ENCODE measurements at regions of chr2 and their contacts with region 1.

Region 1: GRCh38 chr2:70111752-70112591 is 24.7 kb downstream of the PCBP1 start:
- DNase-seq: no peak
- ATAC-seq: no peak
- H3K4me3 ChIP-seq: no peak overlapping the region
- H3K4me3 Mint-ChIP-seq: peak overlapping the region in 1 of 3 donors; percentile 13
- H3K27ac ChIP-seq: peak overlapping the region; percentile 91
- H3K27ac Mint-ChIP-seq: peak overlapping the region; percentile 43 to 79
- H3K4me1 ChIP-seq: peaks cover 11 to 68% of the 10 kb centered on the region in 2 experiments
- H3K4me1 Mint-ChIP-seq: peaks cover 56 to 71% (median 70%) of the 10 kb centered on the region in 3 donors
- H3K27me3 ChIP-seq: no peaks in the 10 kb centered on the region
- H3K27me3 Mint-ChIP-seq: no peaks in the 10 kb centered on the region

Region 2: DNA sequence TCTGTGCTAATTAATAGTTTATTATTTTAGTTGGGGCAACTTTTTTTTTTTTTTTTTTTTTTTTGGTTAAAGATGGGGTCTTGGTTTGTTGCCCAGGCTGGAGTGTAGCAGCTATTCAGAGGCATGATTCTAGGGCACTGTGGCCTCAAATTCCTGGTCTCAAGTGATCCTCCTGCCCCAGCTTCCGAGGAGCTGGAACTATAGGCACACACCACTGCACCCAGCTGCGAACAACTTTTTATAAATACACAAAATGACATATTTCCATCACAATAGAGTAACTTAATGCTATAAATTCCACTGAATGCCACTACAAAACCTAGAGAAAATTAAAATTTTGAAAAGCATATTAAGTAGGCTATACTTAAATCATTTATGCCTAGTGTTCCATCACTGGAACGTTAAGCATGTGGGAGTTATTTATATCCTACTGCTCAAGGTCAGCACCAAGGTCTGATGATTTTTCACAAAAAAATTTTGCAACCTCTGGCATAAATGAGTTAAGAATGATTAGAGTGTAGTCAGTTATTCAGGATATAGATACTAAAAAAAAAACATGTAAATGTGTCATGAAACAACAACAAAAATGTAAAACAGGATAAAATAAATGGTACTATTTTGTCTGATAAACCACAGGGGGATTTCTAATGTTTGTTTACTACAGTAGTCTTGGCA is 771.7 kb before region 1 on chr2:
- CTCF ChIA-PET with region 1: no interaction called
- POLR2A ChIA-PET with region 1: interaction called in 1 of 2 experiments, 10 read pairs
- DNase-seq: no peak
- ATAC-seq: no peak
- H3K4me3 ChIP-seq: no peak overlapping the region
- H3K4me3 Mint-ChIP-seq: no peak overlapping the region
- H3K27ac ChIP-seq: no peak overlapping the region
- H3K27ac Mint-ChIP-seq: no peak overlapping the region
- H3K4me1 ChIP-seq: no peaks in the 10 kb centered on the region
- H3K4me1 Mint-ChIP-seq: no peaks in the 10 kb centered on the region
- H3K27me3 ChIP-seq: no peaks in the 10 kb centered on the region
- H3K27me3 Mint-ChIP-seq: no peaks in the 10 kb centered on the region

Region 3: GRCh38 chr2:70199326-70199864 is 87.4 kb after region 1 on chr2:
- CTCF ChIA-PET with region 1: no interaction called
- POLR2A ChIA-PET with region 1: no interaction called
- DNase-seq: no peak
- ATAC-seq: no peak
- H3K4me3 ChIP-seq: no peak overlapping the region
- H3K4me3 Mint-ChIP-seq: no peak overlapping the region
- H3K27ac ChIP-seq: no peak overlapping the region
- H3K27ac Mint-ChIP-seq: no peak overlapping the region
- H3K4me1 ChIP-seq: no peaks in the 10 kb centered on the region
- H3K4me1 Mint-ChIP-seq: no peaks in the 10 kb centered on the region
- H3K27me3 ChIP-seq: no peaks in the 10 kb centered on the region
- H3K27me3 Mint-ChIP-seq: peaks cover 0 to 3% of the 10 kb centered on the region in 2 donors

Region 4: GRCh38 chr2:71498261-71498701 is 1386.3 kb after region 1 on chr2:
- CTCF ChIA-PET with region 1: no interaction called
- POLR2A ChIA-PET with region 1: no interaction called
- DNase-seq: no peak
- ATAC-seq: no peak
- H3K4me3 ChIP-seq: no peak overlapping the region
- H3K4me3 Mint-ChIP-seq: no peak overlapping the region
- H3K27ac ChIP-seq: no peak overlapping the region
- H3K27ac Mint-ChIP-seq: no peak overlapping the region
- H3K4me1 ChIP-seq: no peaks in the 10 kb centered on the region
- H3K4me1 Mint-ChIP-seq: no peaks in the 10 kb centered on the region
- H3K27me3 ChIP-seq: peaks cover 0 to 25% of the 10 kb centered on the region in 2 experiments
- H3K27me3 Mint-ChIP-seq: peaks cover 3 to 5% of the 10 kb centered on the region in 2 donors